SK-N-SH (cell line): ENCODE measurements at regions of chr16 and their contacts with region 1.

Region 1: DNA sequence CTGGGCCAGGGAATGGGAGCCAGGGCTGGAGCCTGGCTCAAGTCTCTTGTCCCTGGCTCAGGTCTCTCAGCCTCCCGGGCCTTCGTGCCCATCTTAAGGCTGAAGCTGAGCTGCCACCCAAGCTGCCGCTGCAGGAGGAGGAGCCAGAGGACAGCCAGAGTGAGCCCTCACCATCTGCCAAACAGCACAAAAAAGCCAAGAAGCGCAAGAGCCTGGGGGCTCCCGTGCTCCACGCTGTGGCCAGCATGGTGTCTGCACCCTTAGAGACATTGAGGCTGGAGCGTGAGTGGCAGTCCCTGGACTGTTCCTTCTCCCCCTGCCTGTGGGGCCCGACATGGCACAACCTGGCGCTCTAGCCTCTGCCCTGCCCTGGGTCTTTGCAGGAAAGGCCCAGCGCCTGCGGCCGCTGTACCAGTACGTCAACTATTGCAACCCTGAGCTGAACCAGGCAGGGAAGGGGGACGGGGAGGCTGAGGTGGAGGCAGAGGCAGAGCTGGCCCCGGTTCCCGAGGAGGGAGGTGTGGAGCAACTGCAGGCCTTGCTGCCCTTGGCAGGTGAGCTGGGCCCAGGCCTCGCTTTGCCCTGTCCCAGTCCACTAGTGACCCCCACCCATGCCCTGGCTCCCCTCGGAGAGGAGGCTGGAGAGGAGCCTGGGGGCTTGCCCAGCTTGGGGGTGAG is 1.3 kb downstream of the C16orf86 start:
- DNase-seq: peak; percentile 95
- H3K4me3 ChIP-seq: peak overlapping the region; percentile 19 to 67; a peak in 2 of 4 replicates
- H3K27ac ChIP-seq: peak overlapping the region; percentile 56 to 86; a peak in 3 of 4 replicates
- H3K4me1 ChIP-seq: peaks cover 12 to 31% of the 10 kb centered on the region in 2 experiments; a peak in 2 of 4 replicates
- H3K27me3 ChIP-seq: no peaks in the 10 kb centered on the region
- CTCF ChIP-seq: peak; percentile 82
- EP300 ChIP-seq: no peak
- RAD21 ChIP-seq: peak; percentile 74

Region 2: GRCh38 chr16:67530013-67530939 is 137.7 kb before region 1 on chr16:
- CTCF ChIA-PET with region 1: interaction called, 246 read pairs
- POLR2A ChIA-PET with region 1: interaction called, 4 read pairs
- DNase-seq: peak; percentile 89
- H3K4me3 ChIP-seq: peak overlapping the region; percentile 77 to 99
- H3K27ac ChIP-seq: peak overlapping the region; percentile 83; a peak in 3 of 4 replicates
- H3K4me1 ChIP-seq: peaks cover 21% of the 10 kb centered on the region in 2 experiments; a peak in 3 of 4 replicates
- H3K27me3 ChIP-seq: no peaks in the 10 kb centered on the region
- CTCF ChIP-seq: no peak
- EP300 ChIP-seq: 0 out of 4 replicates have a peak, but pooled peaks of 1 of the 2 experiments have one; percentile 6
- RAD21 ChIP-seq: no peak